HCT116 (cell line): ENCODE measurements at regions of chr11 and their contacts with region 1.

Region 1: GRCh38 chr11:36289226-36289852 is at the start of gene COMMD9:
- DNase-seq: peak; percentile 88
- ATAC-seq: peak; percentile 96
- H3K4me3 ChIP-seq: peak within 1 kb of the TSS; percentile 66 to 74
- H3K27ac ChIP-seq: no peak within 1 kb of the TSS
- H3K4me1 ChIP-seq: peaks cover 0 to 12% of the 10 kb centered on the region in 2 experiments; a peak in 1 of 4 replicates
- H3K27me3 ChIP-seq: no peaks in the 10 kb centered on the region
- CTCF ChIP-seq: no peak
- POLR2A ChIP-seq: no peak
- RAD21 ChIP-seq: no peak
- total RNA-seq, gene COMMD9: 33.3 TPM

Region 2: GRCh38 chr11:36622431-36623136 is 333.2 kb after region 1 on chr11:
- CTCF ChIA-PET with region 1: no interaction called
- POLR2A ChIA-PET with region 1: no interaction called
- RAD21 ChIA-PET with region 1: no interaction called
- intact Hi-C with region 1: loop called (anchors 10 kb)
- DNase-seq: peak; percentile 12
- ATAC-seq: peak; percentile 88
- H3K4me3 ChIP-seq: no peak overlapping the region
- H3K27ac ChIP-seq: no peak overlapping the region
- H3K4me1 ChIP-seq: no peaks in the 10 kb centered on the region
- H3K27me3 ChIP-seq: no peaks in the 10 kb centered on the region
- CTCF ChIP-seq: peak; percentile 17 to 61 (median 53); a peak in 5 of 6 replicates
- POLR2A ChIP-seq: no peak
- RAD21 ChIP-seq: peak; percentile 58